ENCODE measurements at regions of chr3 and their contacts with region 1.

Region 1: GRCh38 chr3:65342084-65342683 is 654.4 kb upstream of the ADAMTS9 start:
- DNase-seq: peak; percentile 55
- ATAC-seq: peak; percentile 75
- H3K4me3 ChIP-seq: no peak overlapping the region
- H3K27ac ChIP-seq: no peak overlapping the region
- H3K4me1 ChIP-seq: no peaks in the 10 kb centered on the region
- H3K27me3 ChIP-seq: peaks cover 14% of the 10 kb centered on the region
- CTCF ChIP-seq: peak; percentile 60
- POLR2A ChIP-seq: no peak
- RAD21 ChIP-seq: peak; percentile 67

Region 2: GRCh38 chr3:64759811-64760210 is 582.4 kb before region 1 on chr3:
- CTCF ChIA-PET with region 1: no interaction called
- POLR2A ChIA-PET with region 1: no interaction called
- dilution Hi-C with region 1: no loop called
- in situ Hi-C with region 1: no loop called
- intact Hi-C with region 1: no loop called
- DNase-seq: peak; percentile 12
- ATAC-seq: no peak
- H3K4me3 ChIP-seq: no peak overlapping the region
- H3K27ac ChIP-seq: no peak overlapping the region
- H3K4me1 ChIP-seq: no peaks in the 10 kb centered on the region
- H3K27me3 ChIP-seq: no peaks in the 10 kb centered on the region
- CTCF ChIP-seq: no peak
- POLR2A ChIP-seq: no peak
- RAD21 ChIP-seq: no peak

Region 3: GRCh38 chr3:66195347-66195783 is 853.2 kb after region 1 on chr3:
- CTCF ChIA-PET with region 1: no interaction called
- POLR2A ChIA-PET with region 1: no interaction called
- dilution Hi-C with region 1: no loop called
- in situ Hi-C with region 1: loop called (anchors 10 kb)
- intact Hi-C with region 1: no loop called
- DNase-seq: peak; percentile 68
- ATAC-seq: peak; percentile 98
- H3K4me3 ChIP-seq: peak overlapping the region; percentile 38; the same call in 1 of the 2 replicates
- H3K27ac ChIP-seq: no peak overlapping the region
- H3K4me1 ChIP-seq: no peaks in the 10 kb centered on the region
- H3K27me3 ChIP-seq: peaks cover 3% of the 10 kb centered on the region; the same call in 1 of the 2 replicates
- CTCF ChIP-seq: peak; percentile 52
- POLR2A ChIP-seq: no peak
- RAD21 ChIP-seq: peak; percentile 66

Measured in IMR-90 (cell line).